Esophagus squamous epithelium (tissue), 5 donors: ENCODE measurements at regions of chr14 and their contacts with region 1.

Region 1: GRCh38 chr14:77469539-77469938 is 11.6 kb downstream of the AHSA1 start:
- DNase-seq: no peak
- H3K4me3 ChIP-seq: no peak overlapping the region
- H3K27ac ChIP-seq: peak overlapping the region in 1 of 4 donors; percentile 43
- H3K4me1 ChIP-seq: peaks cover 0 to 28% (median 4%) of the 10 kb centered on the region in 3 donors
- H3K27me3 ChIP-seq: no peaks in the 10 kb centered on the region
- CTCF ChIP-seq: no peak
- POLR2A ChIP-seq: no peak

Region 2: DNA sequence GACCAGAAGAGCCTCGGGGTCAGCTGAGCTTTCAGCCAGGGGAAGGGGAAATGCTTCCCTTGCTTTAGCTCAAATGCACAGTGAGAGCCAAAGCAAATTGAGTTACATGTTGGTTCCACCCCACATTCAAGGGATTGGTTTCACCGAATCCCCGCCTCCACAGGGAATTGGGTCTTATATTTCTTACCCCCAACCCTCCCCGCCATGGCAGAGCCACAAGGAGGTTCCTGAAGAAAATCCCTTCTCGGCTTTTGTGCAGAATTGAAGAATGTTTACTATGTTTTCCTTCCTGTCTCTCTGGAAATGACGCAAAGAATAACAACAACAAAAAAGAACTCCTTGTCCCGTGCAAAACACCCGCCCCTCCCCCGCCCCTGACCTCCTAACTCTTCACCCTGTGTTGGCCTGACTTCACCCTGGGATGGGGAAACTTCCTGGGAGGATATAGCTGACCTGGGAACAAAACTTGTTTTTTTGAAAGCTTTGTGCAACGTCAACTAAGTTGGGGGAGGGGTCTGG is 393.4 kb before region 1 on chr14:
- intact Hi-C with region 1: no loop called
- DNase-seq: no peak
- H3K4me3 ChIP-seq: peak overlapping the region in 2 of 4 donors; percentile 7 to 57
- H3K27ac ChIP-seq: peak overlapping the region; percentile 65 to 90 (median 80)
- H3K4me1 ChIP-seq: peaks cover 0 to 44% (median 16%) of the 10 kb centered on the region in 3 donors
- H3K27me3 ChIP-seq: no peaks in the 10 kb centered on the region
- CTCF ChIP-seq: no peak
- POLR2A ChIP-seq: peak in 2 of 4 donors; percentile 29 to 32

Region 3: GRCh38 chr14:77364146-77364545 is 105.4 kb before region 1 on chr14:
- intact Hi-C with region 1: no loop called
- DNase-seq: no peak
- H3K4me3 ChIP-seq: no peak overlapping the region
- H3K27ac ChIP-seq: no peak overlapping the region
- H3K4me1 ChIP-seq: no peaks in the 10 kb centered on the region
- H3K27me3 ChIP-seq: no peaks in the 10 kb centered on the region
- CTCF ChIP-seq: no peak
- POLR2A ChIP-seq: no peak

Region 4: GRCh38 chr14:77542421-77543239 is 73.1 kb after region 1 on chr14:
- intact Hi-C with region 1: loop called (anchors 10 kb)
- DNase-seq: no peak
- H3K4me3 ChIP-seq: no peak overlapping the region
- H3K27ac ChIP-seq: peak overlapping the region; percentile 3 to 69 (median 68)
- H3K4me1 ChIP-seq: peaks cover 0 to 17% (median 9%) of the 10 kb centered on the region in 3 donors
- H3K27me3 ChIP-seq: no peaks in the 10 kb centered on the region
- CTCF ChIP-seq: no peak
- POLR2A ChIP-seq: no peak